A673 (cell line): ENCODE measurements at regions of chr22 and their contacts with region 1.

Region 1: DNA sequence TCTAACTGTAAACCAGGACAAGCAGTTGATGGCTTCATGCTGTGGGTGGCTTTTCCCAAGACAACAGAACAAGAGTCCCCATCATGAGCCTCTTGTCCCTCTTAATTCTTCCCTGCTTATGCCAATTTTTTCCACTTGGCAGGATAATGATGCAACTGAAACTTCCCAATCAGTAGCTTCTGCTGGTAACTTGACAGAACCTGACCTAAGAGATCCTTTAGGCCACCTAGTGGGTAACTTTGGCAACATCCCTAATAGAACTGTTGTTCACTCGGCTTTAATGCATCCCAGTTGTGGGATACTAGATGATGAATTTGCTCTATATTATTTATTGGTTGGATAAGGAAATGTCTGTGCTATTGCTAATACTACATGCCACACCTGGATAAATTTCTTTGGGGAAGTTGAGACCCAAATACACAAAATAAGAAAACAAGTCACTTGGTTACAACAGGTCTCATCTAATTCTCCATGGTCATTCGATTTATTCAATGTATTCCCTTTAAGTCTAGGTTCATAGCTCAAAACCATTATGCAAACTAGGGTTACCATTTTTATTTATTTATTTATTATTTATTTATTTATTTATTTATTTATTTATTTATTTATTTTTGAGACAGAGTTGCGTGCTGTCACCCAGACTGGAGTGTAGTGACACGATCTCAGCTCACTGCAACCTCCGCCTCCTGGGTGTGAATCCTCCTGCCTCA is 41.4 kb upstream of the NFAM1 start:
- DNase-seq: peak; percentile 80
- H3K4me3 ChIP-seq: no peak overlapping the region
- H3K27ac ChIP-seq: no peak overlapping the region
- H3K4me1 ChIP-seq: peaks cover 3% of the 10 kb centered on the region
- H3K27me3 ChIP-seq: no peaks in the 10 kb centered on the region
- CTCF ChIP-seq: peak; percentile 76

Region 2: DNA sequence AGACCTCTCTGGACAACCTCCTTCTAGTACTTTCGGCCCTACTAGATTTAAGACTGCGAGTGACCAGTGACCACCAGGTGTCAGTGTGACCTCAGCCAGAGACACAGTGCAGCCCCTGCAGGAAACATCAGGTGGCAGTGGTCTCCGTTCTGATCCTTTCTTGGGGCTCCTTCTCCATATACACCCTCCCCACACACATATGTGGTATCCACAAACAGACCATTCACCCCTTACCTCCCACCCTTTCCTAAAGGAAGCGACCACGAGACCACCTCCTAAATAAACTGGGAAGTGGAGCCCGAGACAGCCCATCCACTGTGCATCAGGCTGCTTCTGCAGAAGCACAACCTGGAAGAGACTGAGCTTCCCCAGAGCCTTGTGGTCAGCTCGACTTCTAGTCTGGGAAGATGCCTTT is 304.6 kb before region 1 on chr22:
- CTCF ChIA-PET with region 1: no interaction called
- POLR2A ChIA-PET with region 1: no interaction called
- intact Hi-C with region 1: loop called (anchors 1 kb)
- DNase-seq: peak; percentile 70
- H3K4me3 ChIP-seq: no peak overlapping the region
- H3K27ac ChIP-seq: no peak overlapping the region
- H3K4me1 ChIP-seq: peaks cover 24% of the 10 kb centered on the region
- H3K27me3 ChIP-seq: no peaks in the 10 kb centered on the region
- CTCF ChIP-seq: peak; percentile 77

Region 3: GRCh38 chr22:42596863-42597530 is 123.4 kb after region 1 on chr22:
- CTCF ChIA-PET with region 1: no interaction called
- POLR2A ChIA-PET with region 1: interaction called, 10 read pairs
- intact Hi-C with region 1: no loop called
- DNase-seq: no peak
- H3K4me3 ChIP-seq: no peak overlapping the region
- H3K27ac ChIP-seq: no peak overlapping the region
- H3K4me1 ChIP-seq: no peaks in the 10 kb centered on the region
- H3K27me3 ChIP-seq: no peaks in the 10 kb centered on the region
- CTCF ChIP-seq: no peak